Adrenal gland (tissue), 19 donors: ENCODE measurements at regions of chr1 and their contacts with region 1.

Region 1: DNA sequence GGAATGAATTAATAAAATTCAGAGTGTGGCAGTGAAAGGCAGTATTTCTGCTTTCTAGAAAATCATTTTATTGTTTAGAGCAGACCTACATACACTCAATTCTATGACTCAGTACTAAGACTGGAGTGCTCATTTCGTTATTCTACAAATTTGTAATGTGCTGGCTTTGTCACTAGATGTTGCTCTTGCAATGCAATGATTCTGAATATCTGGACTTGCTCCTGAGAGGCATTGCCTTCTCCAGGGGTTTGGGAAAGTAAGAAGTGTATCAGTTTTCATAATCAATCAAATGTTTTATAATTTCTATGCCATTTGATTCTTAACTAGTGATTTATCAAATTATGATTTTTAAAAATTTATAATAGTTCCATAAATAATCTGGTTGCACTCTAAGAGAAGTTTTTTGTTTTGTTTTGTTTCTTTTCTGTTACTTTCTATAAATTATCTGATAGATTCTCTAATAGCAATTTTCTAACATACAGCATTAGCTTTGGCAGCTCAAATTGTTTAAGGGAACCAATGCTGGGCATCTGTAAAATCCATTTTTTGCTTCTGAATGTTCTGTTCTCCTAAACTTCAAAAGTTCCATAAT is 280.5 kb upstream of the SGIP1 start:
- DNase-seq: peak in 1 of 7 donors; percentile 31
- H3K4me3 ChIP-seq: no peak overlapping the region
- H3K27ac ChIP-seq: no peak overlapping the region
- H3K4me1 ChIP-seq: no peaks in the 10 kb centered on the region
- H3K27me3 ChIP-seq: no peaks in the 10 kb centered on the region
- CTCF ChIP-seq: peak; percentile 58 to 92 (median 81)
- POLR2A ChIP-seq: no peak

Region 2: GRCh38 chr1:66300972-66301451 is 47.6 kb after region 1 on chr1:
- intact Hi-C with region 1: no loop called
- DNase-seq: peak in 2 of 7 donors; percentile 18 to 24
- H3K4me3 ChIP-seq: peak overlapping the region in 1 of 4 donors; percentile 8
- H3K27ac ChIP-seq: no peak overlapping the region
- H3K4me1 ChIP-seq: no peaks in the 10 kb centered on the region
- H3K27me3 ChIP-seq: no peaks in the 10 kb centered on the region
- CTCF ChIP-seq: no peak
- POLR2A ChIP-seq: no peak

Region 3: DNA sequence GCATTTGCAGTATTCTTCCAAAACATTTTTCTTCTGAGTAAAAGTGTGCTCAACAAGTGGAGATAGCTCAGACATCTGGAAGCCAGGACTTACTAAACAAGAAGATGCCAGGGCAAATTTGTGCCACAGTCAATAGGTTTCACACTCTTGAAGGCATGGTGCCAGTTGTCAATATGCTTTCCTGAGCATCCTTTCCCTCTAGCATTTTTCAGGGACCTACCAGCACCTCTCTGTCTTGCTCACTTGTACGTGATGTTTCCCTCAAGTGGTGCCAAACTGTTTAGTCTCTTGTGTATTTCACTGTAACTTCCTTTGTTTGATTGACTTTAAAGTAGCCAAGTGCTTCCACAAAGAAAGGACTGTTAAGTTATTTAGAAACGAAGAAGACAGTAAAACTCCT is 86.5 kb after region 1 on chr1:
- intact Hi-C with region 1: no loop called
- DNase-seq: no peak
- H3K4me3 ChIP-seq: no peak overlapping the region
- H3K27ac ChIP-seq: no peak overlapping the region
- H3K4me1 ChIP-seq: no peaks in the 10 kb centered on the region
- H3K27me3 ChIP-seq: no peaks in the 10 kb centered on the region
- CTCF ChIP-seq: no peak
- POLR2A ChIP-seq: no peak

Region 4: DNA sequence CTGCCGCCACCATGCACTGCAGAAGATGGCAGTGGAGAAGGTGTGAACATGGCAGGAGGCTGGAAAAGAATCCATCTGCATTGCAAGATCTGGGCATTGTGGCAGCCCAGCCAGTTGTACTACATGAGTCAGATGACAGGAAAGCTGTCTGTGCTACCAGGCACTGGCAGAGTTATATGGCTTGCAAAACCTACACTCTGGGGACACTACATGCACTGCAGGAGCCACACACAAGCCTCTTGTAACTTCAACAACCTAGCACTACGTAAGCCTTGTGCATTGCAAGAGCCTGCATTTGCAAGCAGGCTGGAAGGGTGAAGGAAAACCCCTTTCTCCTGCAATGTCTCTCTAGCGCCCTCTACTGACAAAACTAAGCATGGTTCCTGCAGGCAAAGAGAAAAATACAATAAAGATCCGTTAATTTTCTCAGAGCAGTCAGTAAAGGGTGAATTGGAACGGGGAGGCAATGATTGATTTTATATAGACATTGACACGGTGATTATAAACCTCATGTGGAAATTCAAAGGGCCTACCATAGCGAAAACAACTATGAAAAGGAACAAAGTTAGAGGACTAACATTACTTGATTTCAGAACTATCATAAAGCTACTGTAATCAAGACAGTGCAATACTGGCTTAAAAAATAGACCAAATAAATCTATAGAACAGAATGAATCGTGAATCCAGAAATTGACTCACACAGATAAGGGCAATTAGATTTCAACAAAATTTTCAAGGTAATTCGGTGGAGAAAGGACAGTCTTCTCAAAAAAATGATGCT is 472.6 kb after region 1 on chr1:
- intact Hi-C with region 1: loop called in 1 of 2 experiments (anchors 10 kb)
- DNase-seq: peak; percentile 19 to 64 (median 53)
- H3K4me3 ChIP-seq: no peak overlapping the region
- H3K27ac ChIP-seq: no peak overlapping the region
- H3K4me1 ChIP-seq: peaks cover 0 to 5% of the 10 kb centered on the region in 2 donors
- H3K27me3 ChIP-seq: no peaks in the 10 kb centered on the region
- CTCF ChIP-seq: peak; percentile 68 to 97 (median 74)
- POLR2A ChIP-seq: no peak